RWPE1 (cell line): ENCODE measurements at regions of chr10 and their contacts with region 1.

Region 1: DNA sequence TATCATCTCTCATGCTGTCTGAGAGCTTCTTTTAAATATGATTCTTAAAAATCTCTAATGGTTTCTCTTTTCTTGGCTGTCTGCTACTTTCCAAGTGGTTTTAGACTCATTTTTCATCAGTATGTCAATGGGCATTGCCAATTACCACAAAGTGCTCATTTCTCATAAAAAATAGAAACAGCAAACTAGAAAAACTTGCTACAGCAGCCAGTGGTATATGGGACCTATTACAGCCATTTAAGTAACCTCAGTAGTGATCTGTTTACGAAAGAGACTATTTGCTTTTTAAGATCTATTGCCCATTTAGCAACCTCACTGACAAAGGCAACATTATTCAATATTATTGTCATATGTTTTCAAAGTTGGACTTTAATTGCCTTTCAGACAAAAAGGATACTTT is 207.1 kb upstream of the RHOBTB1 start:
- DNase-seq: no peak
- H3K27ac ChIP-seq: no peak overlapping the region
- CTCF ChIP-seq: no peak

Region 2: DNA sequence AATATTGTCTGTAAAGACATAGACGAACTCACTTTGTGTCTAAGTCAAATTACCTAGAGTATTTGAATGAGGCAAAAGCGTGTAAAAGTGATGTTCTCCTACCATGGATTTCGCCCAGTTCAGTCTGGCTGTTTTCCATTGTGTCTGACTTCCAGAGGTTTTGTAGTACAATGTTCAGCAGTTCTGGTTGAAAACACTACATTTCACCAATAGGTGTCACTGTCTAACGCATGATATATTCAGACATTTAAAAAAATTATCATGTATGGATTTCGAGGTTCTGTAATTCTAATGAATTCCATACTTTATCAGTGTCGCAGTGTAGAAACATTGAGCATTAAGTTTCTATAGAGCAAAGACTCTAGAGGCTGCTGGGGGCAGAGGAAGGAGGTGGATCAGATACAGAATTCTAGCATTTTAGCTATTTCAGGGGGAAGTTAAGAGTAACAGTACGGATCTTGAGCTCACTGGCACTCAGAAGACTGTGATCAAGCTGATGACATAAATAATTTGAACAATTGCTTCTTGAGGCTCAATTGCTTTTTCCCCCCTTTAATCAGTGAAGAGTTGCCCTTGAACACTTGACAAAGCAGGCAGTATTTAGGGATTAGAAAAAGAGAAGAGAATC is 10.2 kb before region 1 on chr10:
- CTCF ChIA-PET with region 1: interaction called, 13 read pairs
- POLR2A ChIA-PET with region 1: no interaction called
- DNase-seq: peak; percentile 30
- H3K27ac ChIP-seq: no peak overlapping the region
- CTCF ChIP-seq: peak; percentile 70

Region 3: GRCh38 chr10:61164458-61165160 is 13.6 kb after region 1 on chr10:
- CTCF ChIA-PET with region 1: no interaction called
- POLR2A ChIA-PET with region 1: no interaction called
- DNase-seq: peak; percentile 1
- H3K27ac ChIP-seq: no peak overlapping the region; the same call in 1 of the 2 replicates
- CTCF ChIP-seq: no peak